GM10248 (cell line): ENCODE measurements at regions of chr7 and their contacts with region 1.

Region 1: DNA sequence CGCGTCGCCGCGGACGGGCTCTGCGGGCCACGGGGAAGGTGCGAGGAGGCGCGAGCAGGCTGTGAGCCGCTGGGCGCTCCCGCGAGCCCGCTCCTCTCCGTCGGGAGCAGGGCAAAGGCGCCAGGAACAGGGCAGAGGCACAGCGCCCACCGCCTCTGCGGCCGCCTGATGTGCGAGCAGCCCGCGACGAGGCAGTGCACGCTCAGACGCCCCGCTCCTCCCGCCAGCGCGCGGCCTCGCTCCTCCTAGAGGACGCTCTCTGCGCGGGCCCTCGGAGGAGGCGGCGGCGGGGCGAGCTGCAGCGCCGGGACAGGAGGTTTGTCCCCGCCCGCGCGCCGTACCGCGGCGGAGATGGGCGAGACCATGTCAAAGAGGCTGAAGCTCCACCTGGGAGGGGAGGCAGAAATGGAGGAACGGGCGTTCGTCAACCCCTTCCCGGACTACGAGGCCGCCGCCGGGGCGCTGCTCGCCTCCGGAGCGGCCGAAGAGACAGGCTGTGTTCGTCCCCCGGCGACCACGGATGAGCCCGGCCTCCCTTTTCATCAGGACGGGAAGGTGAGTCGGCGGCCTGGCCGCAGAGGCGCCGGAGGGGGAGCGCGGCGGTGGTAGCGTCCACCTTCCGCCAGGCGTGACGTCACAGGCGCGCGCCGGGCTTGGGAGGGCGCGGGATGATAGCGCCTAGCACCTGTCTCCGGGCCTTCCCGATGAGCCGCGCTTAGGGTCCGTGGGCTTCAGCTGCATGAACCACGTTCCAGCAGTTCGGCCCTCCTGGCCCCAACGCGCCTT is 731 bp downstream of the LANCL2 start:
- DNase-seq: peak; percentile 94
- CTCF ChIP-seq: peak; percentile 23

Region 2: GRCh38 chr7:55381696-55382095 is 15.8 kb after region 1 on chr7:
- CTCF ChIA-PET with region 1: interaction called, 11 read pairs
- POLR2A ChIA-PET with region 1: no interaction called
- DNase-seq: no peak
- CTCF ChIP-seq: no peak

Region 3: DNA sequence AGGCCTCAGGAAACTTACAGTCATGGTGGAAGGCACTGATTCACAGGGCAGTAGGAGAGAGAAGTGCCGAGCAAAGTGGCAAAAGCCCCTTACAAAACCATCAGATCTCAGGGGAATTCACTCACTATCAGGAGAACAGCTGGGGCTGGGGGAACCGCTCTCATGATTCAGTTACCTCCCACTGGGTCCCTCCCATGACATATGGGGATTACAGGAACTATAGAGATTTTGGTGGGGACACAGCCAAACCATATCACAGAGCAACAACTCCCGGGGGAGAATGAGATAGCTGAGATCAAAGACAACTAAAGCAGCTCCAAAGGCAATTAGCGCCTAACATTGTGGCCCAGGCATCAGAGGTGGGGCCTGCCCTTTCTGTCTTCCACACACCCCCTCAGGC is 291.8 kb after region 1 on chr7:
- CTCF ChIA-PET with region 1: no interaction called
- POLR2A ChIA-PET with region 1: no interaction called
- DNase-seq: no peak
- CTCF ChIP-seq: no peak